HEK293 (cell line): ENCODE measurements at regions of chr10 and their contacts with region 1.

Region 1: GRCh38 chr10:124741281-124741921 is 2.8 kb downstream of the FAM53B start:
- H3K4me3 ChIP-seq: no peak overlapping the region
- H3K27ac ChIP-seq: no peak overlapping the region
- H3K4me1 ChIP-seq: peaks cover 31% of the 10 kb centered on the region
- CTCF ChIP-seq: peak; percentile 60; the same call in 1 of the 2 replicates

Region 2: DNA sequence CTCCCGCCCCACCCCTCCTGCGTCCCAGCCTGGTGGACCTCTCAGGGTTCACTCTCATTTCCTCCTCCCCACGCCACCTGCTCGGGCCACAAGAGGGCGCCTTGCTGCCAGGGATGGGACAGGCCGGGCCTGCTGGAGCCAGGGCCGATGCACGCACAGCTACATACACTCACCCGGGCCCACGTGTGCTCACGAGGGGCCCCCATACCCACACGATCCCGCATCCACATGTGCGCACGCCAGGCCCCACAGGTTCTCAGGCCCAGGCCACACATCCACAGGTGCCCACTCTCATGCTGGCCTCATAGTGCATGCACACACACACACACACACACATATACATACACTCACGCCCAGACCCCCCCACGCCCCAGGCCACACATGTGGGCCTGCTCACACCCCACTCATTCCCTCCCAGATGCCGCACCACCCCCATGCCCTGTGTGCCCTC is 211.2 kb before region 1 on chr10:
- CTCF ChIA-PET with region 1: interaction called, 20 read pairs
- POLR2A ChIA-PET with region 1: no interaction called
- H3K4me3 ChIP-seq: no peak overlapping the region
- H3K27ac ChIP-seq: no peak overlapping the region
- H3K4me1 ChIP-seq: no peaks in the 10 kb centered on the region
- CTCF ChIP-seq: peak; percentile 96

Region 3: GRCh38 chr10:124728830-124729661 is 12.4 kb before region 1 on chr10:
- CTCF ChIA-PET with region 1: interaction called, 10 read pairs
- POLR2A ChIA-PET with region 1: no interaction called
- H3K4me3 ChIP-seq: no peak overlapping the region
- H3K27ac ChIP-seq: no peak overlapping the region
- H3K4me1 ChIP-seq: no peaks in the 10 kb centered on the region
- CTCF ChIP-seq: no peak

Region 4: GRCh38 chr10:124755581-124755980 is 14.2 kb after region 1 on chr10:
- CTCF ChIA-PET with region 1: interaction called, 14 read pairs
- POLR2A ChIA-PET with region 1: no interaction called
- H3K4me3 ChIP-seq: no peak overlapping the region
- H3K27ac ChIP-seq: no peak overlapping the region
- H3K4me1 ChIP-seq: no peaks in the 10 kb centered on the region
- CTCF ChIP-seq: no peak